Activated CD4-positive, alpha-beta memory T cell treated with anti-CD3 and anti-CD28 coated beads for 36 hours (primary cell): ENCODE measurements at regions of chr5 and their contacts with region 1.

Region 1: GRCh38 chr5:163473635-163474243 is 13.3 kb downstream of the HMMR start:
- DNase-seq: no peak
- H3K4me3 Mint-ChIP-seq: no peak overlapping the region
- H3K27ac Mint-ChIP-seq: no peak overlapping the region
- H3K4me1 Mint-ChIP-seq: peaks cover 6% of the 10 kb centered on the region
- H3K27me3 Mint-ChIP-seq: no peaks in the 10 kb centered on the region

Region 2: GRCh38 chr5:163695830-163696578 is 222.3 kb after region 1 on chr5:
- CTCF ChIA-PET with region 1: no interaction called
- POLR2A ChIA-PET with region 1: no interaction called
- intact Hi-C with region 1: loop called (anchors 2 kb)
- DNase-seq: no peak
- H3K4me3 Mint-ChIP-seq: no peak overlapping the region
- H3K27ac Mint-ChIP-seq: no peak overlapping the region
- H3K4me1 Mint-ChIP-seq: no peaks in the 10 kb centered on the region
- H3K27me3 Mint-ChIP-seq: no peaks in the 10 kb centered on the region